CD4-positive, alpha-beta memory T cell (primary cell): ENCODE measurements at regions of chr17 and their contacts with region 1.

Region 1: DNA sequence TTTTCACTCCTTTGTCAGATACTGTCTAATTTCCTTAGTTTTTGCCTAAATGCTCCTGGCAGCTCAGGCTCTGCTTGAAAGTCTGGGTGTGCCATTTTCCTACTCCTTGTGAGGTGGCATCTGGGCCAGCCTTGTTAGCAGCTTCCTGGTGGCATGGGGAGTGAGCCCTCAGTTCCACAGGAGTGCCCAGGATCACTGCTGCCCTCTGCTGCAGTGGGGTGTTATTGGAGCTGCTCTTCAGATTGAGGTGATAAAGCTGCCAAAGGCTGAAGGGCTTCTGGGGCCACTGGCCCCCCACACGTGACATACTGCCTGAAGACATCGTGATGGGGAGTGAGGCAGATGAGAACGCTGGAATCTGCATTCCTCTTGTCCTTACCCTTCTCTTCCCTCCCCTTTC is 27.4 kb downstream of the CEP95 start:
- DNase-seq: no peak
- H3K4me3 ChIP-seq: no peak overlapping the region
- H3K4me3 Mint-ChIP-seq: no peak overlapping the region
- H3K27ac ChIP-seq: no peak overlapping the region
- H3K27ac Mint-ChIP-seq: peak overlapping the region in 3 of 7 donors; percentile 37 to 48 (median 43)
- H3K4me1 ChIP-seq: no peaks in the 10 kb centered on the region
- H3K4me1 Mint-ChIP-seq: peaks cover 0 to 2% (median 0%) of the 10 kb centered on the region in 4 donors
- H3K27me3 ChIP-seq: no peaks in the 10 kb centered on the region
- H3K27me3 Mint-ChIP-seq: no peaks in the 10 kb centered on the region

Region 2: DNA sequence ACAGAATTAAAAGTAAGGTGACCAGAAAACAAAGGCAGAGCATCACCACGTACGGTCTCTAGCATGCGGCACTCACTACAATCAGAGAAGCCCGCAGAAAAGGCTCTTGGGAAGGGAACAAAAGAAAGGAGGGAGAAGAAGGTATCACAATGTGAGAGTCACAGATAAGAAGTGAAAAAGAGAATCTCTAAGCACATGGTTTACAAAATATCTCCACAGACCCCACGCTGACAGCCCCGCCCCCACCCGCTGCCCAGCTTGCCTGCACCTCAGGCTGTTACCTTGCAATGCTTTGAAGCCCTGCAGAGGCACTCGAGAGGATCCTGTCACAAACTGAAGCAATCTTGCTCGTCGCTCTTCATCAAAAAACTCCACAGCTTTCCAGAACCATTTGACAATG is 13.1 kb after region 1 on chr17:
- CTCF ChIA-PET with region 1: interaction called, 10 read pairs
- POLR2A ChIA-PET with region 1: no interaction called
- intact Hi-C with region 1: no loop called
- DNase-seq: no peak
- H3K4me3 ChIP-seq: no peak overlapping the region
- H3K4me3 Mint-ChIP-seq: no peak overlapping the region
- H3K27ac ChIP-seq: no peak overlapping the region
- H3K27ac Mint-ChIP-seq: peak overlapping the region in 1 of 7 donors; percentile 78
- H3K4me1 ChIP-seq: no peaks in the 10 kb centered on the region
- H3K4me1 Mint-ChIP-seq: peaks cover 0 to 2% (median 0%) of the 10 kb centered on the region in 4 donors
- H3K27me3 ChIP-seq: no peaks in the 10 kb centered on the region
- H3K27me3 Mint-ChIP-seq: no peaks in the 10 kb centered on the region

Region 3: DNA sequence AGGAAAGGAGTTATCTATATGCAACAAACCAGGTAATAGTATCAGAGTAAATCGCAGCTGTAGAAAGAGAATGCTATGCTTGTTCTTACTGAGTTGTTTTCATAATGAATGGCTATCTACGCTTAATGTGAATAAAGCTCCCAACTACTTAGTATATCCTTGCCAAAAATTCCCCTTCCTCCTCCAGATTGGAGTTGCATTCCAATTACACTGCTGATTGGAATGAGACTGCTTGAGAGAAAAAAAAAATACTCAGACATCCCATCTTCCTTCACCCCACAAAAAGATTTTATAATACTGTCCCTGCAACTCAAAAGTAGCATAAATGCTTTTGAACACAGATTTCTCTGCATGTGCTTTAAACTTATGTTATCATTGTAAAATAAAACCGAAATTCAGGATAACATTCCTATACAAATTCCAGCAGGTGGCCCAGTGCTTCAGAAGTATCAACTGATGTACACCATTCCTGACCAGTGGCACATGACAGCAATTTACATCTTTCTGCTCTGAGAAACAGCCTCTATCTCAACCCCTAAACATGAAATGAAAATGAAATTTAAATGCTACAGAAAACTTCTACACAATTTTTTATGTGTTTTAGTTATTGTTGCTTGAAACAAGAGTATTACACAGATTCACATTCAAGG is 81.0 kb after region 1 on chr17:
- CTCF ChIA-PET with region 1: no interaction called
- POLR2A ChIA-PET with region 1: no interaction called
- intact Hi-C with region 1: no loop called
- DNase-seq: no peak
- H3K4me3 ChIP-seq: no peak overlapping the region
- H3K4me3 Mint-ChIP-seq: no peak overlapping the region
- H3K27ac ChIP-seq: no peak overlapping the region
- H3K27ac Mint-ChIP-seq: peak overlapping the region in 1 of 7 donors; percentile 55
- H3K4me1 ChIP-seq: peaks cover 13% of the 10 kb centered on the region
- H3K4me1 Mint-ChIP-seq: peaks cover 22 to 36% (median 25%) of the 10 kb centered on the region in 4 donors
- H3K27me3 ChIP-seq: no peaks in the 10 kb centered on the region
- H3K27me3 Mint-ChIP-seq: no peaks in the 10 kb centered on the region

Region 4: GRCh38 chr17:64648234-64648633 is 114.1 kb after region 1 on chr17:
- CTCF ChIA-PET with region 1: interaction called, 6 read pairs
- POLR2A ChIA-PET with region 1: no interaction called
- intact Hi-C with region 1: loop called (anchors 10 kb)
- DNase-seq: no peak
- H3K4me3 ChIP-seq: no peak overlapping the region
- H3K4me3 Mint-ChIP-seq: no peak overlapping the region
- H3K27ac ChIP-seq: no peak overlapping the region
- H3K27ac Mint-ChIP-seq: peak overlapping the region in 1 of 7 donors; percentile 77
- H3K4me1 ChIP-seq: peaks cover 12% of the 10 kb centered on the region
- H3K4me1 Mint-ChIP-seq: peaks cover 12 to 38% (median 27%) of the 10 kb centered on the region in 4 donors
- H3K27me3 ChIP-seq: no peaks in the 10 kb centered on the region
- H3K27me3 Mint-ChIP-seq: no peaks in the 10 kb centered on the region